ENCODE measurements at regions of chr18 and their contacts with region 1.

Region 1: GRCh38 chr18:7872569-7872968 is 305.5 kb downstream of the PTPRM start:
- DNase-seq: no peak
- ATAC-seq: no peak
- H3K4me3 Mint-ChIP-seq: no peak overlapping the region
- H3K27ac Mint-ChIP-seq: no peak overlapping the region
- H3K4me1 Mint-ChIP-seq: no peaks in the 10 kb centered on the region
- H3K27me3 Mint-ChIP-seq: no peaks in the 10 kb centered on the region
- CTCF ChIP-seq: no peak

Region 2: GRCh38 chr18:7789856-7790552 is 82.6 kb before region 1 on chr18:
- CTCF ChIA-PET with region 1: no interaction called
- POLR2A ChIA-PET with region 1: no interaction called
- intact Hi-C with region 1: no loop called
- DNase-seq: no peak
- ATAC-seq: no peak
- H3K4me3 Mint-ChIP-seq: no peak overlapping the region
- H3K27ac Mint-ChIP-seq: no peak overlapping the region
- H3K4me1 Mint-ChIP-seq: no peaks in the 10 kb centered on the region
- H3K27me3 Mint-ChIP-seq: no peaks in the 10 kb centered on the region
- CTCF ChIP-seq: no peak

Region 3: DNA sequence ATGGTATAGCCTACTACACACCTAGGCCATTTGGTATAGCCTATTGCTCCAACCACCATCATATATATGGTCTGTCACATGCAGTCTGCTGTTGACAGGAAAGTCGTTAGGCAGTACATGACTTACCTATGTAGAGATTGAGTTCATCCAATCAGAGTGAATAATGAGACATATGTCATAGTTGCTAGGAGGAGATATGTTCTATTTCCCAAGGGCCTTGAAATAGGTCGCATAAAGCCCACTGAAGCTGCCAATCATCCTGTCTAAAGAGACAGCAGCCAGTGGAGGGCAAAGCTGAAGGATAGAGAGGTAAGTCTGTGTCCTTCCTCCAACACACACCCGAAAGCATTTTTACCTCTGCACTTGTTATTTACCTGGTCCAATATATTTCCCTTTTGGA is 42.1 kb before region 1 on chr18:
- CTCF ChIA-PET with region 1: no interaction called
- POLR2A ChIA-PET with region 1: no interaction called
- intact Hi-C with region 1: no loop called
- DNase-seq: no peak
- ATAC-seq: no peak
- H3K4me3 Mint-ChIP-seq: no peak overlapping the region
- H3K27ac Mint-ChIP-seq: no peak overlapping the region
- H3K4me1 Mint-ChIP-seq: no peaks in the 10 kb centered on the region
- H3K27me3 Mint-ChIP-seq: no peaks in the 10 kb centered on the region
- CTCF ChIP-seq: no peak

Region 4: DNA sequence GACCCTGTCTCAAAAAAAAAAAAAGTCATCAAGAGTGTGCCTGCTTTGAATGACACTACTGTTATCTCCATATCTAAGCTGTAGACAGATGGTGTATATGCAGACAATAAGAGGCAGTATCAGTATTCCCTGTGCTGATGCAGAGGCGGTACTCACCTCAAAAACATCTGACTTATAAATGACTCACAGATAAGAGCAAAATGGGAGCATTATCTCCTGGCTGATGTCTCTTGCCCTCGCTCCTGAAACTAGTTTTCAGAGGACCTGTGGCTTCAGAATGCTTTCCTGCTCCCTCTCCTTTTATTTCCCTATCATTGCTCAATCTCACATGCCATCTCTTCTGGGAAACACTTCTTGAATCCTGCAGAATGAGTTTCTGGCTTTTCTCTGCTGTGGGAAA is 15.8 kb before region 1 on chr18:
- CTCF ChIA-PET with region 1: no interaction called
- POLR2A ChIA-PET with region 1: no interaction called
- intact Hi-C with region 1: no loop called
- DNase-seq: no peak
- ATAC-seq: no peak
- H3K4me3 Mint-ChIP-seq: no peak overlapping the region
- H3K27ac Mint-ChIP-seq: no peak overlapping the region
- H3K4me1 Mint-ChIP-seq: no peaks in the 10 kb centered on the region
- H3K27me3 Mint-ChIP-seq: no peaks in the 10 kb centered on the region
- CTCF ChIP-seq: no peak

Region 5: DNA sequence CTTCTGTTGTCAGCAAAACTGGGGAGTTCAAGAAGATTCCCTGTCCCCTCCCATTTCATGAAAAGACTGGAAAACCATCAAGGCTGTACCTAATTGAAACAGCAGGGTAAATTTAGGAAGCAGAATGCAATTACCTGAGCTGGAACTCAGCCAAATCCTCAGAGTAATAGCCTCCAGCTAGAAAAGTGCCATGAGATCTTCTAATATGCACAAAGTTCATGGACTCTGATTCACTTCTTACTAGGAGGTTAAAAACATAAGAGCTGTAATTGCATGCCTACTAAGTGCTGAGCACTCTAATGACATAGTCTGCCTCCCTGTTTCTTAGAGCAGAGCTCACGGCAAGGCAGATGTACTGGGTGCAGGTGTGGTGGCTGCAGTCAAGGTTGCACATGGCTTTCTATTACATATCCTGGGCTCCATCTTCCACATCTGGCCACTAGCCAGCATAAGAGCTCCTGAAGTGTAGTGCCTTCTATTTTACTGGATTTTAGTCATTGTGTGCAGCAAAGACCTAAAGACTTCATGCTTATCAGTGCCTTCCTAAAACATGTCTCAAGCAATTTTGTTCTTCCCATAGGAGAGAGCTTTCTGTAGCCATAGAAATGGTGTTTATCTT is 36.2 kb after region 1 on chr18:
- CTCF ChIA-PET with region 1: no interaction called
- POLR2A ChIA-PET with region 1: no interaction called
- intact Hi-C with region 1: loop called (anchors 1 kb)
- DNase-seq: no peak
- ATAC-seq: no peak
- H3K4me3 Mint-ChIP-seq: no peak overlapping the region
- H3K27ac Mint-ChIP-seq: no peak overlapping the region
- H3K4me1 Mint-ChIP-seq: no peaks in the 10 kb centered on the region
- H3K27me3 Mint-ChIP-seq: no peaks in the 10 kb centered on the region
- CTCF ChIP-seq: no peak